ENCODE measurements at regions of chr6 and their contacts with region 1.

Region 1: GRCh38 chr6:56649053-56649769 is 6.5 kb upstream of the DST start:
- DNase-seq: no peak
- ATAC-seq: no peak
- H3K4me3 ChIP-seq: no peak overlapping the region
- H3K27ac ChIP-seq: no peak overlapping the region
- H3K4me1 ChIP-seq: peaks cover 6 to 64% (median 27%) of the 10 kb centered on the region in 9 donors
- H3K27me3 ChIP-seq: no peaks in the 10 kb centered on the region
- CTCF ChIP-seq: no peak

Region 2: DNA sequence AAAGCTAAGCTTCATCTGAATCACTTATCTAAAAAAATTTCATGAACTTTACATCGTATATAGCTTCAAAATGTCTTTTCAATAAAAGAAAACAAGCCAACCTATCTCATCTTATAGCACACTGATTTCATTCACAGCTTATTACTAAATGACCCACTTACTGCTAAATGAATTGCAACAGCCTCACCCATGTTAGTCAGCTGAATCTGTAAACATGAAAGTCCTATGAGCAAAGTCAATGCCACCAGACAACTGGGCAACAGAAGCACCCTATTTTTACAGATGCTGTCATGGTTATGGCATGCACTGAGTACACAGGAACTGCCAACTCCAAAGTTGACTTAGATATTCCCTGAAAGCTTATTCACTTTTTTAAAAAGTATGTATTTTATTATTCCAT is 34.7 kb after region 1 on chr6:
- intact Hi-C with region 1: loop called in 2 of 10 experiments (anchors 1 to 2 kb)
- DNase-seq: peak in 1 of 2 donors; percentile 59
- ATAC-seq: peak; percentile 83 to 97 (median 91)
- H3K4me3 ChIP-seq: no peak overlapping the region
- H3K27ac ChIP-seq: peak overlapping the region; percentile 58 to 86 (median 75)
- H3K4me1 ChIP-seq: peaks cover 3 to 80% (median 36%) of the 10 kb centered on the region in 9 donors
- H3K27me3 ChIP-seq: no peaks in the 10 kb centered on the region
- CTCF ChIP-seq: no peak

Region 3: GRCh38 chr6:56689114-56689513 is 39.9 kb after region 1 on chr6:
- intact Hi-C with region 1: loop called in 1 of 10 experiments (anchors 2 kb)
- DNase-seq: no peak
- ATAC-seq: no peak
- H3K4me3 ChIP-seq: peak overlapping the region in 6 of 10 donors; percentile 50 to 58 (median 53)
- H3K27ac ChIP-seq: peak overlapping the region in 8 of 10 donors; percentile 0 to 93 (median 88)
- H3K4me1 ChIP-seq: peaks cover 0 to 76% (median 55%) of the 10 kb centered on the region in 9 donors
- H3K27me3 ChIP-seq: no peaks in the 10 kb centered on the region
- CTCF ChIP-seq: no peak

Region 4: GRCh38 chr6:56764081-56764566 is 114.9 kb after region 1 on chr6:
- intact Hi-C with region 1: loop called in 3 of 10 experiments (anchors 5 to 10 kb)
- DNase-seq: no peak
- ATAC-seq: peak in 7 of 8 donors; percentile 23 to 75 (median 66)
- H3K4me3 ChIP-seq: no peak overlapping the region
- H3K27ac ChIP-seq: peak overlapping the region in 2 of 10 donors; percentile 1 to 27
- H3K4me1 ChIP-seq: peaks cover 3 to 58% (median 37%) of the 10 kb centered on the region in 9 donors
- H3K27me3 ChIP-seq: no peaks in the 10 kb centered on the region
- CTCF ChIP-seq: peak in 6 of 9 donors; percentile 16 to 48 (median 41)